ENCODE measurements at regions of chr6 and their contacts with region 1.

Region 1: DNA sequence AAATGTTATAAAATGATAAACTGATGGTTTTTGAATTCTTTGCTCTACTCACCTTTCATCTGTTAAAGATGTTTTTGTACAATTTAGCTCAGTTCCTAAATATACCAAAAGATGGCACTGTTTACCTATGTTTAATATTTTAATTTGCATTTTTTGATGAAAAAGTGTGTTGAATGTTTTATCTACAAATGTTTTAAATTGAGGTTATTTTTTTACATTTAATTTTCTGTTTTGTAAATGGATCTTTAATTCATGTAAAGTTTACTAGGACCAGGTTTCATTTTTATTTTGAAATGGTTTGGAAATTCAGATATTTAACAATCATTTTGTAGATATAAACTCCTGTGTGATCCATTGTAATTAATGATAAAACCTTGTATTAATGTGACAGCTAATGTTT is 30.0 kb downstream of the CDKAL1 start:
- DNase-seq: no peak
- ATAC-seq: peak; percentile 39; the same call in 2 of the 3 replicates
- H3K4me3 ChIP-seq: no peak overlapping the region
- H3K27ac ChIP-seq: peak overlapping the region; percentile 61
- H3K4me1 ChIP-seq: peaks cover 5% of the 10 kb centered on the region
- H3K27me3 ChIP-seq: no peaks in the 10 kb centered on the region
- CTCF ChIP-seq: peak in 2 of 3 experiments; percentile 34 to 44; a peak in 4 of 6 replicates
- EP300 ChIP-seq: no peak
- POLR2A ChIP-seq: no peak
- RAD21 ChIP-seq: peak; percentile 36; the same call in 1 of the 2 replicates

Region 2: GRCh38 chr6:20548264-20548663 is 16.0 kb before region 1 on chr6:
- CTCF ChIA-PET with region 1: interaction called, 10 read pairs
- POLR2A ChIA-PET with region 1: no interaction called
- RAD21 ChIA-PET with region 1: no interaction called
- SMC1A ChIA-PET with region 1: interaction called, 6 read pairs
- in situ Hi-C with region 1: no loop called
- intact Hi-C with region 1: no loop called
- DNase-seq: no peak
- ATAC-seq: no peak
- H3K4me3 ChIP-seq: no peak overlapping the region
- H3K27ac ChIP-seq: no peak overlapping the region
- H3K4me1 ChIP-seq: peaks cover 5% of the 10 kb centered on the region; the same call in 1 of the 2 replicates
- H3K27me3 ChIP-seq: no peaks in the 10 kb centered on the region
- CTCF ChIP-seq: no peak
- EP300 ChIP-seq: no peak
- POLR2A ChIP-seq: no peak
- RAD21 ChIP-seq: no peak

Region 3: DNA sequence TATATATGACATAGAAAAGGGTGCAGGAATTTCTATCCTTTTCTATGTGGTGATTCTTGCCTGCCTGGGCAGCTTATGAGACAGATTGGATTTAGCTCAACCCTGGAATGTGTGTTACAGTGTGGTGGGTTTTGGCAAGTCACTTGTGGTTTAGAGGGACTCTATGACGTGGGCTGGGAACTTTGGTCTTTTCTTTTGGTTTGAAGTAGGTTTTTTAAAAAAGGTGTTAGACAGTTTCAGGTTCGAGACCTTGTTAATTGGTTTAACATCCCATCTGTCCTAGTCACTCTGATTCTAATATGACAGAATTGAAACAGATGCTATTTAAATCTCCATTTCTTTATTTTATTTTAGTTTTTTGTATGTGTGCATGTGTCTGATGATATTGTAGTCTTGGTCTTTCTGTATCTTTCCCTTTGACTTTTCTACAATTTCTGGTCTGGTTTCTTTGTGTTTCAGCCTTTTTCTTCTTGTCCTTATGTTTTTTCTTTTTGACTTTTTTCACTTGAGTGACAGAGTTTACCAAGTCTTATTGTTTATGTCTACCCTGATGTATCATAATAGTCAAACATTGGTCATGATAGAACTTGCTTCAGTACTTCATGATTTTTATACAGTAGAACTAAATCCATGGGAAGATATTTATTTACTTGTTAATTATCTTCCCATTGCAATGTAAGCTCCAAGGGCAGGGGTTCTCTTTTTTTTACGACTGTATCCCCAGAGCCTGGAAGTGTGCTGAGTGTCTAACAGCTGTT is 144.3 kb after region 1 on chr6:
- CTCF ChIA-PET with region 1: interaction called, 3 read pairs
- POLR2A ChIA-PET with region 1: no interaction called
- RAD21 ChIA-PET with region 1: interaction called, 5 read pairs
- SMC1A ChIA-PET with region 1: interaction called, 10 read pairs
- in situ Hi-C with region 1: no loop called
- intact Hi-C with region 1: loop called (anchors 10 kb)
- DNase-seq: peak; percentile 59
- ATAC-seq: peak; percentile 87
- H3K4me3 ChIP-seq: no peak overlapping the region
- H3K27ac ChIP-seq: peak overlapping the region; percentile 20
- H3K4me1 ChIP-seq: peaks cover 13% of the 10 kb centered on the region
- H3K27me3 ChIP-seq: no peaks in the 10 kb centered on the region
- CTCF ChIP-seq: no peak
- EP300 ChIP-seq: peak; percentile 98 to 99
- POLR2A ChIP-seq: no peak
- RAD21 ChIP-seq: no peak

Region 4: DNA sequence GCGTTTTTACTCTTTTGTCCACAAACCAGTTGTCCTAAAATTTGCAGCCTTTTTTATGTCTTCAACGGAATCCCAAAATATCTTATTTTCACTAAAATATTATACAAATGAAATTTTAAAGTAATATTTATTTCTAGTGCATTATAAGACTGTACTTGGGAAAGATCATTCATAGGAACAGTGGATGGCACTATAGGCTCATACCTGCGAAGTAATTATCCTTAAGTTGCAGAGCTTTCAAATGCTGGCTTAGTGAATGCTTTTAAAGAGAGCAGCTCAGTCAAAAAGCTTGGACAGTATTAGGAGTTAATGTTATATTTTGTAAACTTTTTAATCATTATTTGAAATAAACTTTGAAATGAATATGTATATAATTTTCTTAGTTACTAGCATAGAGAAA is 224.9 kb after region 1 on chr6:
- CTCF ChIA-PET with region 1: interaction called, 7 read pairs
- POLR2A ChIA-PET with region 1: no interaction called
- RAD21 ChIA-PET with region 1: interaction called, 4 read pairs
- SMC1A ChIA-PET with region 1: interaction called, 15 read pairs
- in situ Hi-C with region 1: no loop called
- intact Hi-C with region 1: no loop called
- DNase-seq: no peak
- ATAC-seq: no peak
- H3K4me3 ChIP-seq: no peak overlapping the region
- H3K27ac ChIP-seq: no peak overlapping the region
- H3K4me1 ChIP-seq: peaks cover 3% of the 10 kb centered on the region; the same call in 1 of the 2 replicates
- H3K27me3 ChIP-seq: no peaks in the 10 kb centered on the region
- CTCF ChIP-seq: peak in 1 of 3 experiments; percentile 22; a peak in 1 of 6 replicates
- EP300 ChIP-seq: no peak
- POLR2A ChIP-seq: no peak
- RAD21 ChIP-seq: peak; percentile 43

Region 5: GRCh38 chr6:21157186-21157929 is 593.1 kb after region 1 on chr6:
- CTCF ChIA-PET with region 1: interaction called, 3 read pairs
- POLR2A ChIA-PET with region 1: interaction called, 5 read pairs
- RAD21 ChIA-PET with region 1: interaction called, 3 read pairs
- SMC1A ChIA-PET with region 1: no interaction called
- in situ Hi-C with region 1: no loop called
- intact Hi-C with region 1: loop called (anchors 10 kb)
- DNase-seq: peak; percentile 53
- ATAC-seq: peak; percentile 86
- H3K4me3 ChIP-seq: no peak overlapping the region
- H3K27ac ChIP-seq: peak overlapping the region; percentile 54; the same call in 1 of the 2 replicates
- H3K4me1 ChIP-seq: peaks cover 13% of the 10 kb centered on the region; the same call in 1 of the 2 replicates
- H3K27me3 ChIP-seq: no peaks in the 10 kb centered on the region
- CTCF ChIP-seq: no peak
- EP300 ChIP-seq: peak; percentile 72 to 84; a peak in 3 of 4 replicates
- POLR2A ChIP-seq: no peak
- RAD21 ChIP-seq: no peak

Region 6: GRCh38 chr6:21935561-21936028 is 1371.3 kb after region 1 on chr6:
- CTCF ChIA-PET with region 1: interaction called, 10 read pairs
- POLR2A ChIA-PET with region 1: no interaction called
- RAD21 ChIA-PET with region 1: interaction called, 3 read pairs
- SMC1A ChIA-PET with region 1: interaction called, 3 read pairs
- in situ Hi-C with region 1: loop called (anchors 25 kb)
- intact Hi-C with region 1: loop called (anchors 10 kb)
- DNase-seq: no peak
- ATAC-seq: peak; percentile 59
- H3K4me3 ChIP-seq: no peak overlapping the region
- H3K27ac ChIP-seq: no peak overlapping the region
- H3K4me1 ChIP-seq: no peaks in the 10 kb centered on the region
- H3K27me3 ChIP-seq: no peaks in the 10 kb centered on the region
- CTCF ChIP-seq: peak; percentile 27 to 64 (median 51)
- EP300 ChIP-seq: no peak
- POLR2A ChIP-seq: no peak
- RAD21 ChIP-seq: peak; percentile 49